ENCODE measurements at regions of chr20 and their contacts with region 1.

Region 1: GRCh38 chr20:47785854-47786764 is 828 bp upstream of the SULF2 start:
- DNase-seq: peak in 1 of 2 experiments; percentile 75
- H3K4me3 ChIP-seq: peak overlapping the region; percentile 47 to 74 (median 66)
- H3K27ac ChIP-seq: no peak overlapping the region
- H3K4me1 ChIP-seq: peaks cover 0 to 6% (median 3%) of the 10 kb centered on the region in 4 experiments; a peak in 5 of 7 replicates
- H3K27me3 ChIP-seq: peaks cover 2 to 39% (median 28%) of the 10 kb centered on the region in 4 experiments
- CTCF ChIP-seq: peak; percentile 61 to 69 (median 68)
- EP300 ChIP-seq: no peak; a peak in 1 of 3 replicates
- POLR2A ChIP-seq: no peak
- RAD21 ChIP-seq: peak; percentile 85 to 90

Region 2: GRCh38 chr20:47691625-47692024 is 94.5 kb before region 1 on chr20:
- CTCF ChIA-PET with region 1: no interaction called
- POLR2A ChIA-PET with region 1: no interaction called
- DNase-seq: no peak
- H3K4me3 ChIP-seq: no peak overlapping the region
- H3K27ac ChIP-seq: no peak overlapping the region
- H3K4me1 ChIP-seq: peaks cover 0 to 8% (median 5%) of the 10 kb centered on the region in 4 experiments; a peak in 4 of 7 replicates
- H3K27me3 ChIP-seq: no peaks in the 10 kb centered on the region
- CTCF ChIP-seq: no peak
- EP300 ChIP-seq: no peak
- POLR2A ChIP-seq: no peak
- RAD21 ChIP-seq: no peak

Region 3: DNA sequence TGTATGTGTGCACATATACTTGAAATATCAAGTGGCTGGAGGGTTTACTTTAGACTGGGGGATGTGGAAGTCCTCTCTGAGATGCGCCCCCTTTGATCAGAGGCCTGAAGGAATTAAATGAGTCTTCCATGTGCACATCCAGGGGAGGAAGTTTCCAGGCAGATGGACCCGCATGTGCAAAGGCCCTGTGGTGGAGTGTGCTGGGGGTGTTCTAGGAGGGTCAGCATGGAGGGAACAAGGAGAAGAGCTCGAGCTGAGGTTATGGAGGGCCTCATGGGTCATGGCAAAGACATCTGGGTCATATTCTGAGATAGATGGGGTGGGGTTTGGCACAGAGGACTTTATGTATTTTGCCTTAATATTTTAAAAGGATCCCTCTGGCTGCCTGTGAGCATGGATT is 16.9 kb after region 1 on chr20:
- CTCF ChIA-PET with region 1: interaction called, 8 read pairs
- POLR2A ChIA-PET with region 1: interaction called, 10 read pairs
- DNase-seq: no peak
- H3K4me3 ChIP-seq: no peak overlapping the region
- H3K27ac ChIP-seq: no peak overlapping the region
- H3K4me1 ChIP-seq: peaks cover 0 to 9% (median 1%) of the 10 kb centered on the region in 4 experiments; a peak in 5 of 7 replicates
- H3K27me3 ChIP-seq: peaks cover 0 to 10% (median 2%) of the 10 kb centered on the region in 4 experiments; a peak in 3 of 7 replicates
- CTCF ChIP-seq: no peak
- EP300 ChIP-seq: no peak
- POLR2A ChIP-seq: no peak
- RAD21 ChIP-seq: no peak

Region 4: DNA sequence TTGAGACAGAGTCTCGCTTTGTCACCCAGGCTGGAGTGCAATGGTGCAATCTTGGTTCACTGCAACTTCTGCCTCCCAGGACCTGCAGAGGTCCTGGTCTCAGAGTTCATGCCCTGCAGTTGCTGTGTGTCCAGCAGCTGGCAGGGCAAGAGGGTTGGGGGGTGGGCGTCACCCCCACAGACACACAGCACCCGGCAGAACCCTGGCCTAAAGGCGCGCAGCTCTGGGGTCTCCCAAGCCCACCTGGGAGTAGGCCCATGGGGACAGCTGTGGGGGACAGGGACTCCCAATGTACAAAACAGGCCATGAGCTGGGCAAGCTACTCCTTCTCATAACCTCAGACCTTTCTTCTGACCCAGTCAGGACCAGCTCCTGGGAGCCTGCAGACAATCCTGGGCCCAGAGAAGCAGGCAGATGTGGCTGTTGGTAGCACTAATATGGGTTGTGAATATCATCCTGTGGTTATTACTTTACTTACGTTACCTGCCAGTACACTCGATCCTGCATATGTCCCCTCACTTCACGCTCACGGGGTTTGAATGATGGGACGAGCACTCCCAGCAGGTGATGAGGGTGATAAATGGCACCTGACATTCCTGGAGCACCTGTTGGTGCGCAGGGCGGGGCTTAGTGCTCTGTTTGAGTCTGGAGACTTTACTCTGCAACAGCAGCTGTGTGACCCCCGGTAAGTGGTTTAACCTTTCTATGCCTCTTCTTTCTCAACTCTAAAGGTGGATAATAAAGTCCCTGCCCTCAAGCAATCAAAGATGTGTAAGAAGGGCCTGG is 39.1 kb after region 1 on chr20:
- CTCF ChIA-PET with region 1: no interaction called
- POLR2A ChIA-PET with region 1: no interaction called
- DNase-seq: no peak
- H3K4me3 ChIP-seq: no peak overlapping the region
- H3K27ac ChIP-seq: no peak overlapping the region
- H3K4me1 ChIP-seq: no peaks in the 10 kb centered on the region; a peak in 1 of 7 replicates
- H3K27me3 ChIP-seq: no peaks in the 10 kb centered on the region
- CTCF ChIP-seq: no peak
- EP300 ChIP-seq: no peak
- POLR2A ChIP-seq: no peak
- RAD21 ChIP-seq: no peak

Region 5: DNA sequence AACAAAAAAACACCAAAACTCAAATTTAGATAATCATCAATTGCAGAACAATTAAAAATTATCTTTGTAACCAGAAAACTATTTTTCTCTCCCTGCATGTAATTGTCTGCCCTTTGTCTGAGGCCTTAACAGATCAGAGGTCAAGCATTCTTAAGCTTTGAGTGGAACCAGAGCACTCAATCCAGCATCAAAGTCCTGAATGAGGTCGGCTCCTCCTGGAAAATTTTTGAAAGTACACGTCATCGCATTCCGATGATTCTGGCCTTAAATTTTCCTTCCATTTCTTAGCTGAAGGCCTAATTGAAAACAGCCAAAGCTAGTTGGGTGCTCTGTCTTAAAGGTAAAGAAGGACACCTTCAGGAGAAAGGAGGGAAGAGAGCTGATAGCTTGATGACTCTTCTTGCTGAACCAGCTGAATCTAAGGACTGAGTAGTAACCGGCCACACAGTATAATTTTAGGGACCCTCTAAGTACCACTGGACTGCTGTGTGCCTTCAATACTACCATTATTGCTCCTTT is 509.4 kb after region 1 on chr20:
- CTCF ChIA-PET with region 1: interaction called, 13 read pairs
- POLR2A ChIA-PET with region 1: no interaction called
- DNase-seq: peak in 1 of 2 experiments; percentile 80
- H3K4me3 ChIP-seq: no peak overlapping the region
- H3K27ac ChIP-seq: peak overlapping the region; percentile 52
- H3K4me1 ChIP-seq: peaks cover 6 to 23% (median 11%) of the 10 kb centered on the region in 4 experiments
- H3K27me3 ChIP-seq: no peaks in the 10 kb centered on the region
- CTCF ChIP-seq: peak in 2 of 3 experiments; percentile 48 to 57; a peak in 2 of 4 replicates
- EP300 ChIP-seq: peak in 1 of 2 experiments; percentile 25; a peak in 1 of 3 replicates
- POLR2A ChIP-seq: no peak
- RAD21 ChIP-seq: peak; percentile 84 to 89